ENCODE measurements at regions of chr3 and their contacts with region 1.

Region 1: DNA sequence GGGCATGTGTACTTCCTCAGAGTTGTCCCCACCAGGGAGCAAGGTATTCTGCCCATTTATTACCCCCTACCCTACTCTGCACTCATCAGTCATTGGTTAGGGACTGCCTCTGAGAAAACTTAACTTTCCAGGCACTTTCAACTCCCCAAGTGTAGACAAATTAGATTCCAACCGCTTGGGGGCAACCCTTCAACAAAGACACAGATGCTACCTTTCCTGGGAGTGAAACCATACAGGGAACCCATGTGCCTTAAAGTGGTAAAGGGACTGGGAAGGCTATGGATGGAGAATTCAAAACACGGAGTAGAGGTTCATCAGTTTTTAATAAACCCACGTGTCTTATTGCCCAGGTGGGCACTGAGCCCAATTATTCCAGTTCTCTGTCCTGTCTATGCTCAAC is 19.4 kb upstream of the UBE2E2 start:
- DNase-seq: peak; percentile 65 to 73
- H3K4me3 ChIP-seq: no peak overlapping the region
- H3K4me3 Mint-ChIP-seq: no peak overlapping the region
- H3K27ac Mint-ChIP-seq: no peak overlapping the region
- H3K4me1 ChIP-seq: peaks cover 5% of the 10 kb centered on the region
- H3K4me1 Mint-ChIP-seq: peaks cover 19% of the 10 kb centered on the region
- H3K27me3 ChIP-seq: no peaks in the 10 kb centered on the region
- H3K27me3 Mint-ChIP-seq: no peaks in the 10 kb centered on the region
- CTCF ChIP-seq: peak; percentile 54 to 75

Region 2: DNA sequence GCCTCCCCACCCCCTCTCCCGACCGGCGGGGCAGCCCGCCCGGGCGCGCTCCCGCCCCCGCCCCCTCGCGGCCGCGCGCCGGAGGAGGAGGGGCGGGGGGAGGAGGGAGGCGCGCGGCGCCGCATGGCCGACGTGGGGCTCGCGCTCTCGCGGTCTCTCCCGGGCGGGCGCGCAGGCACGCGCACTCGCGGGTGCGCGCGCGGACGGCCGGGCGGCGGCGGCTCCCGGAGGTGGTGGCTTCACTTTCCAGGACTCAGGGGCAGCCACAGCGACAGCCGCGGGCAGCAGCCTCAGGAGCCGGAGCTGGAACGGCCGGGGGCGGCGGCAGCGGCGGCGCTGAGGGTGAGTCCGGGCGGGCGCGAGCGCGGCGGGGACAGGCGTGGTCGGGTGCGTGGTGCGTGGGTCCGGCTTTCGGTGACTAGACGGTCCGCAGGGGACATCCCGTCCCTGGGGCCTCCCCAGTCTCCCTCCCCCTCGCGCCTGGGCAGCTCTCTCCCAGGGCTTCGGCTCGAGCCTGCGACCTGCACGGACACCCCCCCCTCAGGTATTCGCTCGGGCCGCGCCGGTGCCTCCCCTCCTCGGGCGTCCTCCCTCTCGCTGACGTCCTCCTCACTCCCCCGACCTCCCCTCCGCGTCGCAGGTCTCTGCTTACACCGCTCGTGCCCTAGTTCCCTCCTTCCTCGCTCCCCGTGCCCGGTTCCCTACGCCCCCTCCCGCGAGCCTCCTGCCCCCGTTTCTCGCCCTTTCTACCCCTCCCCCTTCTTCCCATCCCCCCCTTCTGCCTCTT is 19.4 kb after region 1 on chr3 and contains the start of gene UBE2E2:
- CTCF ChIA-PET with region 1: no interaction called
- POLR2A ChIA-PET with region 1: no interaction called
- intact Hi-C with region 1: loop called (anchors 1 kb)
- DNase-seq: peak; percentile 75 to 85
- H3K4me3 ChIP-seq: peak within 1 kb of the TSS; percentile 92
- H3K4me3 Mint-ChIP-seq: peak within 1 kb of the TSS; percentile 87
- H3K27ac Mint-ChIP-seq: peak within 1 kb of the TSS; percentile 78
- H3K4me1 ChIP-seq: peaks cover 15% of the 10 kb centered on the region
- H3K4me1 Mint-ChIP-seq: peaks cover 8% of the 10 kb centered on the region
- H3K27me3 ChIP-seq: no peaks in the 10 kb centered on the region
- H3K27me3 Mint-ChIP-seq: no peaks in the 10 kb centered on the region
- CTCF ChIP-seq: no peak
- total RNA-seq, gene UBE2E2: 67.5 and 83.8 TPM in 2 replicates

Region 3: GRCh38 chr3:23435318-23435717 is 251.6 kb after region 1 on chr3:
- CTCF ChIA-PET with region 1: no interaction called
- POLR2A ChIA-PET with region 1: no interaction called
- intact Hi-C with region 1: loop called (anchors 10 kb)
- DNase-seq: peak in 1 of 2 experiments; percentile 37
- H3K4me3 ChIP-seq: no peak overlapping the region
- H3K4me3 Mint-ChIP-seq: no peak overlapping the region
- H3K27ac Mint-ChIP-seq: no peak overlapping the region
- H3K4me1 ChIP-seq: no peaks in the 10 kb centered on the region
- H3K4me1 Mint-ChIP-seq: no peaks in the 10 kb centered on the region
- H3K27me3 ChIP-seq: no peaks in the 10 kb centered on the region
- H3K27me3 Mint-ChIP-seq: no peaks in the 10 kb centered on the region
- CTCF ChIP-seq: no peak

Region 4: GRCh38 chr3:23629181-23629893 is 445.6 kb after region 1 on chr3:
- CTCF ChIA-PET with region 1: no interaction called
- POLR2A ChIA-PET with region 1: no interaction called
- intact Hi-C with region 1: loop called (anchors 10 kb)
- DNase-seq: no peak
- H3K4me3 ChIP-seq: no peak overlapping the region
- H3K4me3 Mint-ChIP-seq: no peak overlapping the region
- H3K27ac Mint-ChIP-seq: peak overlapping the region; percentile 30
- H3K4me1 ChIP-seq: peaks cover 28% of the 10 kb centered on the region
- H3K4me1 Mint-ChIP-seq: peaks cover 25% of the 10 kb centered on the region
- H3K27me3 ChIP-seq: no peaks in the 10 kb centered on the region
- H3K27me3 Mint-ChIP-seq: no peaks in the 10 kb centered on the region
- CTCF ChIP-seq: no peak

Region 5: DNA sequence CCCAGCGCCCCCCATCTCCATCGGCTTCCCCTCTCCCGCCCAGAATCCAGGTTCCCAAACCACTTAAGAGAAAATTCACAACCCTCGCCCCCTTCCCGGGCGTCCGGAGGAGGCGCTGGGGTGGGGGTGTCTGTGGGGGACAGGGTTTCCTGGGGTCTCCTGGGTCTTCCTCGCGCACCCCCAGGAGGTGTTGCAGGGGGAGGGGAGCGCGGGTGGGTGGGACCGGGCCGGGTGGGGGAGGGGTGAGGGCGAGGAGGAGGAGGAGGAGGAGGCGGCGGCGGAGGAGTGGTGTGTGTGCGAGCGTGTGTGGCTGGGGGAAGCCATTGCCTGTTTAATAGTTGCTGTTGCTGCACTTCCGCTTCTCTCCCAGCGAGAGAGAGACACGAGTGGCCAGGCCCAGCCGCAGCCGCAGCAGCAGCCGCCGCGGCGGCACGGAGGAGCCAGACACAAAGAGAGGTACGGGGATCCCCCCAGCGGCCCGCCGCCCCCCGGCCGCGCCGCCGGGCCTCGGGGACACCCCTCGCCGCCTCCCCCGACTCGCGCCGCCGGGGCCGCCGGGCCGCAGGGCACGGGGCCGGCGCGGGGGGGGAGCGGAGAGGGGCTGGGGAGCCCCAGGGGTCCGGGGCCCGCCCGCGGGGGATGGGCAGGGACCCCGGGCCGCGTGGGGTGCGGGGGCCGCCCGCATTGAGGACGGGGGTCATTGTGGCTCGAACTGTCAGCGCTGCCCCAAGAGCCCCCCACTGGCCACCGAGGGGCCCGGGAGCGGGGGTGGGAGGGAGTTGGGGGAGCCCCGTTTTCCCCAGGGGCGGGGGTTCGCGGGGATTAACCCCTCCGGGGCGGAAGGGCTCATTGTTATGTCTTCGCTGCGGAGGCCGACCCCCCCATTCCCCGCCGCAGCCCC is 622.1 kb after region 1 on chr3 and contains the start of gene UBE2E1:
- CTCF ChIA-PET with region 1: no interaction called
- POLR2A ChIA-PET with region 1: no interaction called
- intact Hi-C with region 1: loop called (anchors 10 kb)
- DNase-seq: peak; percentile 61 to 62
- H3K4me3 ChIP-seq: peak within 1 kb of the TSS; percentile 76
- H3K4me3 Mint-ChIP-seq: peak within 1 kb of the TSS; percentile 84
- H3K27ac Mint-ChIP-seq: peak within 1 kb of the TSS; percentile 95
- H3K4me1 ChIP-seq: peaks cover 28% of the 10 kb centered on the region
- H3K4me1 Mint-ChIP-seq: peaks cover 38% of the 10 kb centered on the region
- H3K27me3 ChIP-seq: no peaks in the 10 kb centered on the region
- H3K27me3 Mint-ChIP-seq: no peaks in the 10 kb centered on the region
- CTCF ChIP-seq: peak in 1 of 2 experiments; percentile 5
- total RNA-seq, gene UBE2E1: 98.6 and 104 TPM in 2 replicates